K562 (cell line): ENCODE measurements at regions of chr20 and their contacts with region 1.

Region 1: GRCh38 chr20:354298-355064 is 7.6 kb downstream of the NRSN2 start:
- DNase-seq: peak; percentile 81 to 87 (median 84)
- ATAC-seq: peak; percentile 95
- H3K4me3 ChIP-seq: no peak overlapping the region
- H3K27ac ChIP-seq: peak overlapping the region; percentile 33; the same call in 1 of the 3 replicates
- H3K4me1 ChIP-seq: peaks cover 6 to 12% of the 10 kb centered on the region in 2 experiments; a peak in 4 of 5 replicates
- H3K27me3 ChIP-seq: no peaks in the 10 kb centered on the region
- CTCF ChIP-seq: peak; percentile 88 to 93 (median 92)
- EP300 ChIP-seq: 0 out of 2 replicates have a peak, but pooled peaks have one; percentile 19
- POLR2A ChIP-seq: no peak
- RAD21 ChIP-seq: peak; percentile 93 to 94

Region 2: GRCh38 chr20:258963-259362 is 95.5 kb before region 1 on chr20:
- CTCF ChIA-PET with region 1: no interaction called
- POLR2A ChIA-PET with region 1: no interaction called
- in situ Hi-C with region 1: no loop called
- intact Hi-C with region 1: no loop called
- DNase-seq: peak; percentile 18 to 68 (median 48)
- ATAC-seq: peak; percentile 93
- H3K4me3 ChIP-seq: no peak overlapping the region
- H3K27ac ChIP-seq: no peak overlapping the region
- H3K4me1 ChIP-seq: peaks cover 12 to 21% of the 10 kb centered on the region in 2 experiments
- H3K27me3 ChIP-seq: no peaks in the 10 kb centered on the region
- CTCF ChIP-seq: peak; percentile 58 to 64 (median 62)
- EP300 ChIP-seq: no peak
- POLR2A ChIP-seq: no peak
- RAD21 ChIP-seq: peak; percentile 40 to 67; a peak in 3 of 4 replicates

Region 3: GRCh38 chr20:391041-391711 is 36.7 kb after region 1 on chr20:
- CTCF ChIA-PET with region 1: no interaction called
- POLR2A ChIA-PET with region 1: interaction called, 8 read pairs
- in situ Hi-C with region 1: loop called (anchors 5 kb)
- intact Hi-C with region 1: no loop called
- DNase-seq: no peak
- ATAC-seq: peak; percentile 28
- H3K4me3 ChIP-seq: no peak overlapping the region
- H3K27ac ChIP-seq: no peak overlapping the region
- H3K4me1 ChIP-seq: peaks cover 0 to 8% of the 10 kb centered on the region in 2 experiments; a peak in 2 of 5 replicates
- H3K27me3 ChIP-seq: no peaks in the 10 kb centered on the region
- CTCF ChIP-seq: no peak
- EP300 ChIP-seq: no peak
- POLR2A ChIP-seq: no peak
- RAD21 ChIP-seq: no peak

Region 4: DNA sequence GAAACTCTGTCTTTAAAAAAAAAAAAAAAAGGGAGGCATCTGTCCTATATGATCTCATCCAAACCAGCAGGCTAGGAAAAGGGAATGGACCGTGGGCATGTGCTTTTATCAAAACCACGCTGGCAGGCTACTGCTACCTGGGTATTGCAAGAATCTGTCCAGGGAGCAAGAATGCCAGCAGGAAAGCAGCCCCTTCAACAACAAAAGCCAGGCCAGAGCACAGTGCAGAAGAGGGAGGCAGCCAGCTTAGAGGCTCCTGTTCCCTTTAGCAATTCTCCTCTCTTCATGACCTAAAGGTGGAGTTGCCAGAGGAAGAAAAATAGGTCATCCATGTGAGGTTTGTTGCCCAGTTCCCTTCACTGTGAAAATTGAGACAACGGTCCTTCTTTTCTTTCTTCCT is 89.6 kb after region 1 on chr20:
- CTCF ChIA-PET with region 1: no interaction called
- POLR2A ChIA-PET with region 1: no interaction called
- in situ Hi-C with region 1: no loop called
- intact Hi-C with region 1: no loop called
- DNase-seq: no peak
- ATAC-seq: no peak
- H3K4me3 ChIP-seq: no peak overlapping the region
- H3K27ac ChIP-seq: no peak overlapping the region
- H3K4me1 ChIP-seq: peaks cover 0 to 12% of the 10 kb centered on the region in 2 experiments; a peak in 3 of 5 replicates
- H3K27me3 ChIP-seq: no peaks in the 10 kb centered on the region
- CTCF ChIP-seq: no peak
- EP300 ChIP-seq: no peak
- POLR2A ChIP-seq: no peak
- RAD21 ChIP-seq: no peak

Region 5: GRCh38 chr20:478949-479429 is 124.5 kb after region 1 on chr20:
- CTCF ChIA-PET with region 1: interaction called, 13 read pairs
- POLR2A ChIA-PET with region 1: interaction called, 3 read pairs
- in situ Hi-C with region 1: loop called (anchors 5 kb)
- intact Hi-C with region 1: loop called (anchors 1 kb)
- DNase-seq: peak; percentile 26 to 67 (median 28)
- ATAC-seq: peak; percentile 88
- H3K4me3 ChIP-seq: no peak overlapping the region
- H3K27ac ChIP-seq: no peak overlapping the region
- H3K4me1 ChIP-seq: no peaks in the 10 kb centered on the region; a peak in 1 of 5 replicates
- H3K27me3 ChIP-seq: no peaks in the 10 kb centered on the region
- CTCF ChIP-seq: peak; percentile 27 to 65 (median 52); a peak in 4 of 6 replicates
- EP300 ChIP-seq: no peak
- POLR2A ChIP-seq: no peak
- RAD21 ChIP-seq: peak; percentile 68 to 71

Region 6: DNA sequence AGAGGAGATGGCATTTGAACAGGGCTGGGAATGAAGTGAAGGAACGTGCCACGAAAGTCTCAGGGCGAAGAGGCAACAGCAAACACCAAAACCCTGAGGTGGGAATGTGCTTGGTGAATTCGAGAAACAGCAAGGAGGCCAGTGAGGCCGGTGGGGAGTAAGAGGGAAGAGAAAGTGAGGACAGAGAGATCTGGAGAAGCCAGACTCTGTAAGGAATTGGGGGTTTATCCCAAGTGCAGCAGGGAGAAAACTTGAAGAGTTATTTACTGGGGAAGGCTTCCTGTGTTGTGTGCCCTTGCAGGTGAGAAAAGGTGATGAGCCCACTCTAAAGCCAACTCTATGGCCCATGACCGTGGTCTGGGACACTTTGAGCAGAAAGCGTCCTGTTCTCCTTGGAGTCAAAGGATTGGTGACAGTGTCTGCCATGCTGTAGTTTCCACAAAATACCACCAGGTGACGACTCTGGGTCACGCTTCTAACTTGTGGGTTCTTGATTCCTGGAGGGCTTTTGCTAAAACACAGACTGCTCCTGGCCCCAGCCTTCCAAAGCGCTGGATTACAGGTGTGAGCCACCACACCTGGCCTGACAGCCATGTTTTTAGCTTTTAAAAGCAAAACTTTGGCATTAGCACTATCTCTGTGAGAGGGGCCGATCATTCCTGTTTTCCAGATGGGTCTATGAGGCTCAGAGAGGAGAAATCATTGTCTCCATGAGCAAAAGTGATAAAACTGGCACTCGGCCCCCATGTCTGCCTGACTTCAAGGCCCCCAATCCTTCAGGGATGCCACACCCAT is 207.2 kb after region 1 on chr20:
- CTCF ChIA-PET with region 1: no interaction called
- POLR2A ChIA-PET with region 1: no interaction called
- in situ Hi-C with region 1: no loop called
- intact Hi-C with region 1: loop called (anchors 1 kb)
- DNase-seq: peak; percentile 48 to 81 (median 59)
- ATAC-seq: peak; percentile 91
- H3K4me3 ChIP-seq: no peak overlapping the region
- H3K27ac ChIP-seq: no peak overlapping the region
- H3K4me1 ChIP-seq: peaks cover 0 to 15% of the 10 kb centered on the region in 2 experiments; a peak in 3 of 5 replicates
- H3K27me3 ChIP-seq: no peaks in the 10 kb centered on the region
- CTCF ChIP-seq: peak; percentile 89 to 96 (median 91)
- EP300 ChIP-seq: no peak
- POLR2A ChIP-seq: no peak
- RAD21 ChIP-seq: peak; percentile 89 to 95

Region 7: GRCh38 chr20:728248-728944 is 373.9 kb after region 1 on chr20:
- CTCF ChIA-PET with region 1: interaction called, 3 read pairs
- POLR2A ChIA-PET with region 1: no interaction called
- in situ Hi-C with region 1: loop called (anchors 5 kb)
- intact Hi-C with region 1: no loop called
- DNase-seq: peak; percentile 84 to 88 (median 87)
- ATAC-seq: peak; percentile 99
- H3K4me3 ChIP-seq: peak overlapping the region; percentile 61
- H3K27ac ChIP-seq: peak overlapping the region; percentile 74
- H3K4me1 ChIP-seq: peaks cover 5 to 18% of the 10 kb centered on the region in 2 experiments; a peak in 4 of 5 replicates
- H3K27me3 ChIP-seq: no peaks in the 10 kb centered on the region
- CTCF ChIP-seq: peak; percentile 76 to 92 (median 86)
- EP300 ChIP-seq: no peak
- POLR2A ChIP-seq: no peak
- RAD21 ChIP-seq: peak; percentile 95 to 96